ENCODE measurements at regions of chr5 and their contacts with region 1.

Region 1: DNA sequence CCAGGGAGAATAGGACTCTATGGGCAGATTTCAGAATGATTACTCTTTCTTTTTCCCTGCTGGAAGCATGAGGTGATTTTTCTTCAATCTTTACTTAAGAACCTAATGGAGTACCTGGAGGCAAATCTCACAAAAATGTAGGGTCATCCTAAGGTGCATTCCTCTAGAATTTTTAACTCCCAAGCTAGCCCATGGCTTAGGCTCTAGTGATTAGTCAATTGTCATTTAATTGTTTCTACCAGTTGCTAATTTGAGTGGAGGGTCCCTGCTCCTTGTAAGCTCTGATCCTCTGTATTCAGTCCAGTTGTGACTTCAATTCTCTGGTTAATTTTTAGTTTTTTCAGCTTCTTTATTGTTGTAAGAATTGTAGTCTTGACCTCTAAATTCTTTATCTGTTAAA is 467.0 kb downstream of the HTR1A start:
- DNase-seq: no peak
- H3K4me3 ChIP-seq: no peak overlapping the region
- H3K27ac ChIP-seq: no peak overlapping the region
- H3K4me1 ChIP-seq: no peaks in the 10 kb centered on the region
- H3K27me3 ChIP-seq: no peaks in the 10 kb centered on the region
- CTCF ChIP-seq: no peak

Region 2: GRCh38 chr5:63524281-63524680 is 29.1 kb after region 1 on chr5:
- CTCF ChIA-PET with region 1: no interaction called
- POLR2A ChIA-PET with region 1: no interaction called
- intact Hi-C with region 1: no loop called
- DNase-seq: no peak
- H3K4me3 ChIP-seq: no peak overlapping the region
- H3K27ac ChIP-seq: no peak overlapping the region
- H3K4me1 ChIP-seq: no peaks in the 10 kb centered on the region
- H3K27me3 ChIP-seq: no peaks in the 10 kb centered on the region
- CTCF ChIP-seq: no peak

Region 3: GRCh38 chr5:63596254-63596653 is 101.0 kb after region 1 on chr5:
- CTCF ChIA-PET with region 1: no interaction called
- POLR2A ChIA-PET with region 1: no interaction called
- intact Hi-C with region 1: loop called (anchors 5 kb)
- DNase-seq: no peak
- H3K4me3 ChIP-seq: no peak overlapping the region
- H3K27ac ChIP-seq: no peak overlapping the region
- H3K4me1 ChIP-seq: no peaks in the 10 kb centered on the region
- H3K27me3 ChIP-seq: no peaks in the 10 kb centered on the region
- CTCF ChIP-seq: no peak

Region 4: DNA sequence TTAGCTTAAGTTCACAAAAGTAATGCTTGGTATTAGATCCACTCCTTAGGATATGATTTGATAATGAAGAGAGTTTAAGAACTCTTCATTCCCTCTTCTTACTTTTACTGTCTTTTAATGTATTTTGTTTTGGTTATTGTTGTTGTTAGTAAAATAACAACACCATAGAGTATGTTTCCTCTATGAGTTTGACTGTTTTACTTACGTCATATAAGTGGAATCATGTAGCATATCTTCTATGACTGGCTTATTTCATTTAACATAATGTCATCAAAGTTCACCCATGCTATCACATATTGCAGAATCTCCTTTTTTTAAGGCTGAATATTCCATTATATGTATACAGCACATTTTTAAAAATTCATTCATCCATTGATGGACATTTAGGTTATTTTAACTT is 568.3 kb after region 1 on chr5:
- CTCF ChIA-PET with region 1: no interaction called
- POLR2A ChIA-PET with region 1: no interaction called
- intact Hi-C with region 1: no loop called
- DNase-seq: no peak
- H3K4me3 ChIP-seq: no peak overlapping the region
- H3K27ac ChIP-seq: no peak overlapping the region
- H3K4me1 ChIP-seq: no peaks in the 10 kb centered on the region
- H3K27me3 ChIP-seq: no peaks in the 10 kb centered on the region
- CTCF ChIP-seq: no peak